ENCODE measurements at regions of chr15 and their contacts with region 1.

Region 1: GRCh38 chr15:89087830-89088604 is at the start of gene ABHD2:
- DNase-seq: peak; percentile 99
- H3K4me3 Mint-ChIP-seq: no peak within 1 kb of the TSS
- H3K27ac Mint-ChIP-seq: peak within 1 kb of the TSS; percentile 21
- H3K4me1 Mint-ChIP-seq: peaks cover 33% of the 10 kb centered on the region
- H3K27me3 Mint-ChIP-seq: no peaks in the 10 kb centered on the region
- total RNA-seq, gene ABHD2: 57.2 to 64.9 TPM

Region 2: DNA sequence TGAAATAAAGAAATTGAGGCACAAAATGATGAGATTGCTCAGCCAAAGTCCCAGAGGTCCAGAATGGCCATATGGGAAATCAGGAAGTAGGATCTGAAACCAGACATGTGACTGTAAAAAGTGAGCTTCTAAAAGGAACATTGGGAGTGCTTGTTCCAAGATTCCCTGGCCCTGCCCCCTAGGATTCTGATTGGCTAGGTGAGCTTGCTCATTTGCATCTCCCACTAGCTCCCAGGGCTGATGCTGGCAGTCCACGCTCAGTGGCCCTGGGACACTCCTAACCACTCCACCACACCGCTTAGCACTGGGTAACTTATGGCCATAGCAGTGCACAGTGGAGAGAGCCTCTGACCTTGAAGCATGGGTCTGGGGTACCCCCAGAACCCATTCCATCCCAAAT is 1158.2 kb before region 1 on chr15:
- CTCF ChIA-PET with region 1: no interaction called
- intact Hi-C with region 1: no loop called
- DNase-seq: no peak
- H3K4me3 Mint-ChIP-seq: no peak overlapping the region
- H3K27ac Mint-ChIP-seq: no peak overlapping the region
- H3K4me1 Mint-ChIP-seq: no peaks in the 10 kb centered on the region
- H3K27me3 Mint-ChIP-seq: no peaks in the 10 kb centered on the region

Region 3: GRCh38 chr15:88897456-88898194 is 190.4 kb before region 1 on chr15:
- CTCF ChIA-PET with region 1: no interaction called
- intact Hi-C with region 1: loop called (anchors 2 kb)
- DNase-seq: peak; percentile 84
- H3K4me3 Mint-ChIP-seq: no peak overlapping the region
- H3K27ac Mint-ChIP-seq: no peak overlapping the region
- H3K4me1 Mint-ChIP-seq: peaks cover 43% of the 10 kb centered on the region
- H3K27me3 Mint-ChIP-seq: no peaks in the 10 kb centered on the region

Region 4: GRCh38 chr15:89057504-89058133 is 30.4 kb before region 1 on chr15:
- CTCF ChIA-PET with region 1: interaction called, 75 read pairs
- intact Hi-C with region 1: no loop called
- DNase-seq: peak; percentile 91
- H3K4me3 Mint-ChIP-seq: no peak overlapping the region
- H3K27ac Mint-ChIP-seq: no peak overlapping the region
- H3K4me1 Mint-ChIP-seq: peaks cover 11% of the 10 kb centered on the region
- H3K27me3 Mint-ChIP-seq: no peaks in the 10 kb centered on the region

Region 5: GRCh38 chr15:89129123-89129815 is 41.3 kb after region 1 on chr15:
- CTCF ChIA-PET with region 1: interaction called, 22 read pairs
- intact Hi-C with region 1: loop called (anchors 1 kb)
- DNase-seq: peak; percentile 71
- H3K4me3 Mint-ChIP-seq: no peak overlapping the region
- H3K27ac Mint-ChIP-seq: no peak overlapping the region
- H3K4me1 Mint-ChIP-seq: peaks cover 22% of the 10 kb centered on the region
- H3K27me3 Mint-ChIP-seq: no peaks in the 10 kb centered on the region

Region 6: DNA sequence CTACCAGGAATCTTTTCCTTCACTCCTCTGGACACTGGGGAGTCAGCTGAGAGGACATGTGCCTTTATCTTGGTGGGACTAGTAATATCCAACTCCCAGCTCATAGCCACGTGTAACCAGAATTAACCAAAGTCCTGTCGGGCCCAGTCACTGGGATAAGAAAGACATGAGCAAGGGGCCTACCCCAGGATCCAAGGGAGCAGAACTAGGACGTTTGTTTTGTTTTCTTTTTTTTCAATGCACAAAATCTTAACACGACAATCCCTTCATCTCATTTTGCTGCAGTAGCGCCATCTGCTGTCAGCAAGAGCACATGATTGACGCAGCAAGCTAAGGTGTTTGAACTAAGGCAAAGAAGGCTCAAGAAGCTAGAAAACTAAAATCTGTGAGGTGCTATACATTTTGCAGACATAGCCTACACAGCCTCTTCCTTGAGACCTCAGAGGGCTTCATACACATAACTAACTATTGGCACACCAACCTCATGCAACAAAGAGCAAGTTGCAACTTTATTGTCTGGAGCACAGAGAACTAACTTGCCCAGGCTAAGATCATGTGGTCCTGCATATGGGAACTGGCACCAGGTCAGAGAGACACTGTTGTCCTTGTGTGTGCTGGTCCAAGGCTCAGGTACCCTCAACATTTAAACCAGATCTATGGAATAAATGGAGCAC is 89.8 kb after region 1 on chr15:
- CTCF ChIA-PET with region 1: interaction called, 31 read pairs
- intact Hi-C with region 1: loop called (anchors 1 kb)
- DNase-seq: peak; percentile 86
- H3K4me3 Mint-ChIP-seq: no peak overlapping the region
- H3K27ac Mint-ChIP-seq: peak overlapping the region; percentile 94
- H3K4me1 Mint-ChIP-seq: peaks cover 46% of the 10 kb centered on the region
- H3K27me3 Mint-ChIP-seq: no peaks in the 10 kb centered on the region

Region 7: GRCh38 chr15:89334510-89335288 is 246.7 kb after region 1 on chr15 and contains the start of gene POLG:
- CTCF ChIA-PET with region 1: no interaction called
- intact Hi-C with region 1: loop called (anchors 1 kb)
- DNase-seq: peak; percentile 99
- H3K4me3 Mint-ChIP-seq: peak within 1 kb of the TSS; percentile 90
- H3K27ac Mint-ChIP-seq: peak within 1 kb of the TSS; percentile 94
- H3K4me1 Mint-ChIP-seq: peaks cover 52% of the 10 kb centered on the region
- H3K27me3 Mint-ChIP-seq: peaks cover 3% of the 10 kb centered on the region
- total RNA-seq, gene POLG: 93.0 to 96.5 TPM

Measured in activated naive CD4-positive, alpha-beta T cell treated with anti-CD3 and anti-CD28 coated beads for 36 hours (primary cell).